Panc1 (cell line): ENCODE measurements at regions of chr11 and their contacts with region 1.

Region 1: DNA sequence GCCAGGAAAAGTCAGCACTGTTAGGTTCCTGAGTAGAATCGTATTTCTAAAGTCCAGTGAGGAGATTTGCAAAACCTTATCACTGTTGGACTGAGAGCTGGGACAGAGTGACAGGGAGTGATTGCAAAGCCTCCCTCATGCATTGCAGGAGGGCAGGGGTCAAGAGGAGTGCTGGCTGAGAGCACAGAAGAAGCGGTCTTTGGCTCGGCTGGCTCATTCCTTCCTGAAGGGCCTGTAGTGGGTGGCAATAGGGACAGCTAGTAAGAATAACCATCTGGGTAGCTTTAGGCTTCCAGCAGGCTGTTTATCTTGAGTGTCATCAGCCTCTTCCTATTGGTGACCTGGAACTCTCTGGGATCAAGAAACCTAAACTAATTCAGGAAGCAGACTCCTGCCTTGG is 53.4 kb downstream of the CD44 start:
- DNase-seq: no peak
- ATAC-seq: peak; percentile 26
- H3K4me3 ChIP-seq: no peak overlapping the region
- H3K27ac ChIP-seq: peak overlapping the region; percentile 86
- H3K4me1 ChIP-seq: peaks cover 96% of the 10 kb centered on the region
- H3K27me3 ChIP-seq: no peaks in the 10 kb centered on the region
- CTCF ChIP-seq: no peak

Region 2: DNA sequence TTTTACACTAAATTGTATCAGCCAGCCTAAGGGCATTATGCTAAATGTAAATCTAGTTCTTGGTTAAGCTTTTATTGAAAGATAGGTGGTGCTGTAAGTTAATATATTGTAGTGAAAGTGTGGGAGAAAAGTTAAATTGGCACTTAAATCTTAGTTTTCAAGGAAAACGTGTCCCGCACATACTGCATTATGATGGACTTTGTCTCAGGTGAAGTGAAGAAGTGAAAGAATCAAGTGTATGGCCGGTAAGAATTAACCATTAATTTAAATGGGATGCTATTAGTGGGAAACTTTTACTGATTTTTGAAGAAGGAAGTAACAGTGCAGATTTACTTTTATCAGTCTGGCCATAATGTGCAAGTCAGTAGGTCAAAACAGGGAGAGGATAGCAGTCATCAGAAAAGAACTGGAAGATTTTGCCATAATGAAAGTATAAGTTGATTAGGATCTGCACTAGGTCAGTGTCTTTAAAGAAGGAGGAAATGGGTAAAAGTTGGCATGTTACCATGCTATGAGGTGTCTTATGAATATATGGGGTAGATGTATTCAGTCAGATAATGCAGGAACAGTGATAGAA is 194.3 kb before region 1 on chr11:
- CTCF ChIA-PET with region 1: no interaction called
- POLR2A ChIA-PET with region 1: no interaction called
- in situ Hi-C with region 1: no loop called
- intact Hi-C with region 1: no loop called
- DNase-seq: no peak
- ATAC-seq: peak; percentile 65
- H3K4me3 ChIP-seq: no peak overlapping the region
- H3K27ac ChIP-seq: peak overlapping the region; percentile 91
- H3K4me1 ChIP-seq: peaks cover 21% of the 10 kb centered on the region
- H3K27me3 ChIP-seq: no peaks in the 10 kb centered on the region
- CTCF ChIP-seq: peak; percentile 49; the same call in 1 of the 2 replicates

Region 3: GRCh38 chr11:35150454-35150853 is 41.9 kb before region 1 on chr11:
- CTCF ChIA-PET with region 1: no interaction called
- POLR2A ChIA-PET with region 1: interaction called, 11 read pairs
- in situ Hi-C with region 1: no loop called
- intact Hi-C with region 1: no loop called
- DNase-seq: no peak
- ATAC-seq: no peak
- H3K4me3 ChIP-seq: no peak overlapping the region
- H3K27ac ChIP-seq: peak overlapping the region; percentile 97
- H3K4me1 ChIP-seq: peaks cover 100% of the 10 kb centered on the region
- H3K27me3 ChIP-seq: no peaks in the 10 kb centered on the region
- CTCF ChIP-seq: no peak